ENCODE measurements at regions of chr6 and their contacts with region 1.

Region 1: GRCh38 chr6:2186516-2186915 is 58.9 kb downstream of the GMDS start:
- DNase-seq: peak; percentile 65
- ATAC-seq: peak; percentile 72
- H3K4me3 Mint-ChIP-seq: no peak overlapping the region
- H3K27ac Mint-ChIP-seq: no peak overlapping the region
- H3K4me1 Mint-ChIP-seq: peaks cover 49% of the 10 kb centered on the region
- H3K27me3 Mint-ChIP-seq: peaks cover 6% of the 10 kb centered on the region
- CTCF ChIP-seq: no peak

Region 2: DNA sequence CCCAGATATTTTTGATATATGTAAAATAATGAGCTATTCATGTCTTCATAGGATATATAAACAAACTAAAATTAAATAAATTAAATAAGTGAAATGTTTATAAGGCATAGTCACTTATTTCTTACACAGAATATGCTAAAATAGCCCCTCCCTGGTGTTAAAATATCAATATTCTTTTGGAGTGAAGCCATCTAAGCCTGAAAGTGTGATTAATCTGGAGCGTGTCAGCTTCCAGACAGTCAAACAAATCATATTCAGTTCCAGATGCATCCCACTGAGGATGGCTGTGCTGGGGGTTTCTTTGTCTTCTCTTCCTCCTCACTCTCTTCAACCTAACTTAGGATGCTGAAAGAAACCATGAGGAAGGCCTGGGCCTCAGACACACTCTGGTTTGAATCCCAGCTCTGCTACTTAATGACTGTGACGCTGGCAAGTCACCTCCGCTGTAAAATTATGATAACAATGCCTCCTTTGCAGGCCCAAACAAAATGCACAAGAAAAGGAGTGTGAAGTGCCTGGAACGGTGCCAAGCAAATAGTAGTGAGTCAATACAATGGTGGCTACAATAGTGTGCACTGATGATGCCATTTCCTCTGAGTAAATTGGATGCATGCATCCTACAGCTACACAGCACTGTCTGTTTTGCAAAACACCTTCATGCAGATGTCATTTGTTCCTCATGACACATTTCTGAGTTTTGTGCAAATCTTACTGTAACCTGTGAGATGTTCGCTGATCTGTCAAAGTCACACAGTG is 415.4 kb before region 1 on chr6:
- CTCF ChIA-PET with region 1: no interaction called
- POLR2A ChIA-PET with region 1: no interaction called
- intact Hi-C with region 1: loop called (anchors 10 kb)
- DNase-seq: peak; percentile 62
- ATAC-seq: peak; percentile 74
- H3K4me3 Mint-ChIP-seq: no peak overlapping the region
- H3K27ac Mint-ChIP-seq: no peak overlapping the region
- H3K4me1 Mint-ChIP-seq: peaks cover 54% of the 10 kb centered on the region
- H3K27me3 Mint-ChIP-seq: no peaks in the 10 kb centered on the region
- CTCF ChIP-seq: no peak

Region 3: DNA sequence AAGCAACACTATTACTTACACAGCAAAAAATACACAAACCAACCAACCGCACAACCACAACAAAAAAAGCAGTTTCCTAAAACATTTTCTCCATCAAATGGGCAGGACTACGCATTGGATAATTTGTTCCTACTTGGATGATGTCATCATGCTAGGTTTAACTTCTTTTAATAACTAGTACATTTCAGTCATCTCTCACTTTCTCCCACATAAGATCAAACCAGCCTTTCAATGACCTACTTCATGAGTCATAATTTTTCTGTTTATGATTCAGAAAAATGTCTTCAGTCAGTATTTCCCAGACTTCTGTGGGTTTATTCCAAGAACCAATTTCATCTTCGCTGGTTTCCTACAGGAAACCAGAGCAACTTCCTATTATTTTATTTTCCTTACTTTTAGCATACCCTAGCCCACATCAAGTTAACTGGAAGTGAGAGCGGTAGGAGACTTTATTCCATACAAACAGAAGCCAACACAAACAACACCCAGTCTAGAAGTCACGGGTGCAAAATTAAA is 75.3 kb before region 1 on chr6:
- CTCF ChIA-PET with region 1: interaction called, 3 read pairs
- POLR2A ChIA-PET with region 1: no interaction called
- intact Hi-C with region 1: loop called (anchors 5 kb)
- DNase-seq: peak; percentile 34
- ATAC-seq: peak; percentile 89
- H3K4me3 Mint-ChIP-seq: peak overlapping the region; percentile 71
- H3K27ac Mint-ChIP-seq: peak overlapping the region; percentile 89
- H3K4me1 Mint-ChIP-seq: peaks cover 40% of the 10 kb centered on the region
- H3K27me3 Mint-ChIP-seq: no peaks in the 10 kb centered on the region
- CTCF ChIP-seq: no peak

Measured in activated CD8-positive, alpha-beta T cell treated with anti-CD3 and anti-CD28 coated beads for 36 hours (primary cell).